T-cell (primary cell): ENCODE measurements at regions of chr4 and their contacts with region 1.

Region 1: GRCh38 chr4:77385124-77385969 is 220.3 kb upstream of the CXCL13 start:
- DNase-seq: peak in 31 of 35 experiments; percentile 1 to 66 (median 23)
- ATAC-seq: peak in 2 of 4 experiments; percentile 29 to 41
- H3K4me3 ChIP-seq: no peak overlapping the region
- H3K4me3 Mint-ChIP-seq: no peak overlapping the region
- H3K27ac ChIP-seq: no peak overlapping the region
- H3K27ac Mint-ChIP-seq: no peak overlapping the region
- H3K4me1 ChIP-seq: no peaks in the 10 kb centered on the region
- H3K4me1 Mint-ChIP-seq: peaks cover 0 to 4% (median 0%) of the 10 kb centered on the region in 3 donors
- H3K27me3 ChIP-seq: no peaks in the 10 kb centered on the region
- H3K27me3 Mint-ChIP-seq: peaks cover 0 to 3% of the 10 kb centered on the region in 2 donors

Region 2: GRCh38 chr4:75623026-75623425 is 1762.3 kb before region 1 on chr4:
- CTCF ChIA-PET with region 1: no interaction called
- POLR2A ChIA-PET with region 1: no interaction called
- DNase-seq: no peak
- ATAC-seq: no peak
- H3K4me3 ChIP-seq: no peak overlapping the region
- H3K4me3 Mint-ChIP-seq: no peak overlapping the region
- H3K27ac ChIP-seq: no peak overlapping the region
- H3K27ac Mint-ChIP-seq: no peak overlapping the region
- H3K4me1 ChIP-seq: no peaks in the 10 kb centered on the region
- H3K4me1 Mint-ChIP-seq: no peaks in the 10 kb centered on the region
- H3K27me3 ChIP-seq: no peaks in the 10 kb centered on the region
- H3K27me3 Mint-ChIP-seq: no peaks in the 10 kb centered on the region

Region 3: DNA sequence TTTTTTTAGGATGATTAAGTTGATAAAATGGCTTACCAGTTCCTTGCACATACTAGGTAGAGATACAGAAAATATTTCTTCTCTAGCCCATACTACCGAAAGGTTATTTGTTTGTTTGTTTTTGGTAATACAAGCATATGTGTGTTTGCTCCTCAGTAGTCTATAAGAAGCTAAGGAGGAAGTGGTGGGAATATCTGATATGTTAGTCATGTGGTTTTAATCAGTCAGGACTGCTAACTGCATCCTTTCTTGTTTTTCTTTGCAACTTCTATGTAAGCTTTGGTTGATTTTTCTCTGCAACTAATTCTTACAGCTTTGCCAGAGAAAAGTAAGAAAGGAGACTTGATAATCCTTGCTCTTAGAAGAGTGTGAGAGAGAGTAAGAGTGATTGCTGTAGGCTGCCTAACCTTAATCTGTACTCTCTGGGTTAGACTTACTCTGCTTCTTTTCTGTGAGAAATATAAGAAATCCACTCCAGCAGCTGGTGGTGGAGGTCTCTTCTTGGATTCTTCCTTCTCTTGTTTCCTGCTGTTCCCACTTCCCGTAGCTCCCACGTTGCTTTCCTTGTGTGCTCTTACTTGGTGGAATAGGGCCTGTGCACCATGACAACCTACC is 407.5 kb before region 1 on chr4:
- CTCF ChIA-PET with region 1: no interaction called
- POLR2A ChIA-PET with region 1: no interaction called
- DNase-seq: no peak
- ATAC-seq: peak in 3 of 4 experiments; percentile 42 to 65 (median 54)
- H3K4me3 ChIP-seq: no peak overlapping the region
- H3K4me3 Mint-ChIP-seq: no peak overlapping the region
- H3K27ac ChIP-seq: no peak overlapping the region
- H3K27ac Mint-ChIP-seq: peak overlapping the region; percentile 11 to 41
- H3K4me1 ChIP-seq: peaks cover 15 to 28% of the 10 kb centered on the region in 2 experiments
- H3K4me1 Mint-ChIP-seq: peaks cover 50 to 62% (median 54%) of the 10 kb centered on the region in 3 donors
- H3K27me3 ChIP-seq: no peaks in the 10 kb centered on the region
- H3K27me3 Mint-ChIP-seq: no peaks in the 10 kb centered on the region

Region 4: DNA sequence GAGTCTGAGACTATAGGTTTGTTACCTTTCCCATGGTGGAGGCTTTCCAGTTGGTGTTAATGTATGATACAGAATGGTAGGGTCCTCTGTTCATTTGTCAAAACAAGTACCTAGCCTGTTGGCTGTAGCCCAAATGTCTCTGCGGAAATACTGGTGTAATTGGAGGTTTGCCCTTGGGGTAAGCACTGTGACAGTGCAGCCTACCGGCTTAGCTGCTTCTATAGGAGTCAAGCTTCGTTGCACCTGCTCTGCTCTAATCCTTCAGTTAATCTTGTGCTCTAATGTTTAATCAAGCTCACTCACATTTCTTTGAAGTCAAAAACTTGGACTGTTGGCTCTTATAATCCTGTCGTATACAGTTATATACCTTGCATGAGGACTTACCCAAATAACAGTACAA is 24.9 kb before region 1 on chr4:
- CTCF ChIA-PET with region 1: interaction called in 1 of 2 experiments, 13 read pairs
- POLR2A ChIA-PET with region 1: no interaction called
- DNase-seq: no peak
- ATAC-seq: no peak
- H3K4me3 ChIP-seq: no peak overlapping the region
- H3K4me3 Mint-ChIP-seq: no peak overlapping the region
- H3K27ac ChIP-seq: no peak overlapping the region
- H3K27ac Mint-ChIP-seq: no peak overlapping the region
- H3K4me1 ChIP-seq: no peaks in the 10 kb centered on the region
- H3K4me1 Mint-ChIP-seq: no peaks in the 10 kb centered on the region
- H3K27me3 ChIP-seq: no peaks in the 10 kb centered on the region
- H3K27me3 Mint-ChIP-seq: peaks cover 0 to 7% of the 10 kb centered on the region in 2 donors

Region 5: DNA sequence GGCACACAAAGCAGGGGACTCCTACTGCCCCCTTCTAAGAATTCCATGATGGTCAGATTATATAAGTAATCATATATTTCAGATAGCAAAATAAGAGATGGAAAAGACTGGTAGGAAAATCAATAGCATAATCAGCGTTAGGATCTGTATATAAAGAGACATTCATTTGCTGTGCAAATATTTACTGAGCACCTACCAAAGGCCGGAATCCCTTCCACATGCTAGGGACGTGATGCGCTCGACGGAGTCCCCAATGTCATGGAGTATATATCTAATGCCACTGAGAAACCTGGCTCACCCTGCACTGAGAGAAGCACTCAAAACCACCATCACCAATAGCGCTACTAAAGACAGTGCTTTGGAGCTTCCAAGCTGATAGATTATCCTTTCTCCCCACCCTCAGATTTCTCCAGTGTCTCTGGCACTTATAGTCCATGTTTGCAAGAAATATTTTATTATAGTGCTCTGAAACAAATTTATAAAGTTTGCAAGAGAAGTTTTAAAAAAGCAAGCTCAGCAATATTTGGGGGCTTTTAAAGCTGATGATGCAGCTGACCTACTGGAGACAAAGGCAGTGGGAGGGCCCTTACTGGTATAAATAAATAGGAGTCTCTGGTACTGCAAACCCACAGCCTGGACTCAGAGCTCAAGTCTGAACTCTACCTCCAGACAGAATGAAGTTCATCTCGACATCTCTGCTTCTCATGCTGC is 220.0 kb after region 1 on chr4 and contains the start of gene CXCL13:
- CTCF ChIA-PET with region 1: no interaction called
- POLR2A ChIA-PET with region 1: no interaction called
- DNase-seq: no peak
- ATAC-seq: no peak
- H3K4me3 ChIP-seq: no peak within 1 kb of the TSS
- H3K4me3 Mint-ChIP-seq: no peak within 1 kb of the TSS
- H3K27ac ChIP-seq: no peak within 1 kb of the TSS
- H3K27ac Mint-ChIP-seq: no peak within 1 kb of the TSS
- H3K4me1 ChIP-seq: no peaks in the 10 kb centered on the region
- H3K4me1 Mint-ChIP-seq: peaks cover 0 to 5% (median 4%) of the 10 kb centered on the region in 3 donors
- H3K27me3 ChIP-seq: no peaks in the 10 kb centered on the region
- H3K27me3 Mint-ChIP-seq: peaks cover 5 to 7% of the 10 kb centered on the region in 2 donors
- total RNA-seq, gene CXCL13: 0.30 TPM in 1 of 5 donors, not detected in the others